Posterior vena cava (tissue), 2 donors: ENCODE measurements at regions of chr1 and their contacts with region 1.

Region 1: DNA sequence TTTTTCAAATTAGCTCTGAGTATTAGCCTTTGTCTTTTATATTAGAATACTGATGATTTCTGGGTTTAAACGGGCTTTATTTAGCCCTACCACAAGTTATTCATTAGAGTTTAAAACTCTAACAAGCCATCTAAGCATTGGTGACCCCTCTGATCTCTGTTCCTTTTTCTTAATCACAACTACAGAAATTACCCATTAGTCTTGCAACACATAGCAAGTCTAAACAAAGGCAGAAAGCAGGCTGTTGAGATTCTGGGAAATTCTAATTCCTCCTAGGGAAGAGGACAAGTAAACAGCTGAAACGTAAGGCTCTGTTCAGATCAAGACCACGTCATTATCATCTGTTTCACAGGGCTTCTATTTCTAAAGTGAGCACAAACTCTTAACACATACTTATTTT is 491.2 kb upstream of the ZRANB2 start:
- DNase-seq: no peak

Region 2: GRCh38 chr1:71414179-71414578 is 157.9 kb before region 1 on chr1:
- intact Hi-C with region 1: no loop called
- DNase-seq: no peak

Region 3: GRCh38 chr1:71587961-71588360 is 15.9 kb after region 1 on chr1:
- intact Hi-C with region 1: loop called in 1 of 2 experiments (anchors 1 kb)
- DNase-seq: no peak

Region 4: GRCh38 chr1:72282271-72283021 is 710.4 kb after region 1 on chr1 and contains the start of gene NEGR1:
- intact Hi-C with region 1: loop called in 1 of 2 experiments (anchors 10 kb)
- DNase-seq: peak; percentile 96
- total RNA-seq, gene NEGR1: 25.7 to 27.9 TPM